Activated CD4-positive, alpha-beta T cell treated with anti-CD3 and anti-CD28 coated beads, Interleukin-2, amount 10 ng/mL, durations not matched to agents 24 days and 14 days (primary cell): ENCODE measurements at regions of chr14 and their contacts with region 1.

Region 1: GRCh38 chr14:71555654-71556559 is 376.3 kb upstream of the RGS6 start:
- DNase-seq: peak; percentile 91
- H3K4me3 Mint-ChIP-seq: peak overlapping the region; percentile 59
- H3K27ac Mint-ChIP-seq: peak overlapping the region; percentile 92
- H3K4me1 Mint-ChIP-seq: peaks cover 61% of the 10 kb centered on the region
- H3K27me3 Mint-ChIP-seq: no peaks in the 10 kb centered on the region

Region 2: GRCh38 chr14:71221119-71221518 is 334.8 kb before region 1 on chr14:
- intact Hi-C with region 1: loop called (anchors 1 kb)
- DNase-seq: no peak
- H3K4me3 Mint-ChIP-seq: no peak overlapping the region
- H3K27ac Mint-ChIP-seq: no peak overlapping the region
- H3K4me1 Mint-ChIP-seq: peaks cover 15% of the 10 kb centered on the region
- H3K27me3 Mint-ChIP-seq: no peaks in the 10 kb centered on the region

Region 3: DNA sequence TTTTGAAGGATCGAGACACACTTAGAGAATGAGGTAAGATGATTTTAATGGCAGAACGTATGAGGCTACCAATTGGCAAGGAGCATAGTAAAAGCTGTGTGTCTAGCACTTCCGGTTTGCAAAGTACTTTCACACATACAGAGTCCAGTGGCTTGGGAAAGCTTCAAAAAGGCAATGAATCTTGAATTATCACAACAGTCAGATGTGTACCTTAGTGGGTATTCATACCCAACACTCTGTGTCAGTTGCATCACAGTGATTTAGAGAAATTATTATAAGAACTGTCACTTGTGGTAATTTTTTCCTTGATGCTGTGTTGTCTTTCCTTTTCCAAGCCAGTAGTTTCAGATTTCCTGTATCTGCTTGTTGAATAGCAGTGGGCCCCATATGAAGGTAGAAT is 224.5 kb before region 1 on chr14:
- intact Hi-C with region 1: loop called (anchors 1 kb)
- DNase-seq: no peak
- H3K4me3 Mint-ChIP-seq: peak overlapping the region; percentile 23
- H3K27ac Mint-ChIP-seq: peak overlapping the region; percentile 92
- H3K4me1 Mint-ChIP-seq: peaks cover 55% of the 10 kb centered on the region
- H3K27me3 Mint-ChIP-seq: no peaks in the 10 kb centered on the region

Region 4: DNA sequence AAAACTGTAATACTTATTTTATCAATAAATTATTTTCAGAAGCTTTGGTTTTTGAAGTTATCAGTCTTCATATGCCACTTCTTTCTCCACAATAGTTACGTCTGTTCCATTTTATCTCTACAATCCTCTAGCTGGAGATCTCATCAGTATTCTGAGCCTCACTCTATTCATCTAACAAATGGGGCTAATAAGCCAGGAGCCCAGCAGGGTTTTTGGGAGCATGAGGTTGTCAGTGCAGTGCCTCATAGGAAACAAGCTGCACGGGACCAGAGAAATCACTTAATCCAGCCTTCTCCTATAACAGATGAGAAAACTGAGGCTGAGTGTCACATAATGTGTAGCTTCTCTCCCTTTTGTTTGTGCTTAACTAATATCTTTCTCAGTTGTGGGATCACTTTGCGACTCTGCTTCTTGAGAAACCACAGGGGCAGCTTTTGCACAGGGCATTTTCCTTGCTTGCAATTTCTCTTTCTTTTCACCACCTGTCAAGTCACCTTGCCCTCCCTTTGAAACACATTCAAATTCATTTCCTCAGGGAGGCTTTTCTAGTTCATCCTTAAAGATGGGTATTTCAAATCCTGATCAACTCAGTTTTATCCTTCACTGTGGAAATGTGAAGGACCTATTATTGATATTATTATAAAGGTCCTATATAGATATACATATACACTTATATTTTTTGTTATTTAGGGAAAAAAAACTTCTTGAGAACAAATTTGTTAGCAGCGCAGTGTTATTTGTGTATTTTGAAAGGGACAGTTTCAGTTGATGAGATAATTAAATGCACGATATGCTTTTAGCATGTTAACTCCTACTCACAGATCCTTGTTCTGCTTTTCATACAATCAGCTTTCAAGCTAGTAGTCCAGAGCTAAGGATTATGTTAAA is 125.3 kb before region 1 on chr14:
- intact Hi-C with region 1: no loop called
- DNase-seq: peak; percentile 48
- H3K4me3 Mint-ChIP-seq: no peak overlapping the region
- H3K27ac Mint-ChIP-seq: no peak overlapping the region
- H3K4me1 Mint-ChIP-seq: peaks cover 14% of the 10 kb centered on the region
- H3K27me3 Mint-ChIP-seq: no peaks in the 10 kb centered on the region

Region 5: DNA sequence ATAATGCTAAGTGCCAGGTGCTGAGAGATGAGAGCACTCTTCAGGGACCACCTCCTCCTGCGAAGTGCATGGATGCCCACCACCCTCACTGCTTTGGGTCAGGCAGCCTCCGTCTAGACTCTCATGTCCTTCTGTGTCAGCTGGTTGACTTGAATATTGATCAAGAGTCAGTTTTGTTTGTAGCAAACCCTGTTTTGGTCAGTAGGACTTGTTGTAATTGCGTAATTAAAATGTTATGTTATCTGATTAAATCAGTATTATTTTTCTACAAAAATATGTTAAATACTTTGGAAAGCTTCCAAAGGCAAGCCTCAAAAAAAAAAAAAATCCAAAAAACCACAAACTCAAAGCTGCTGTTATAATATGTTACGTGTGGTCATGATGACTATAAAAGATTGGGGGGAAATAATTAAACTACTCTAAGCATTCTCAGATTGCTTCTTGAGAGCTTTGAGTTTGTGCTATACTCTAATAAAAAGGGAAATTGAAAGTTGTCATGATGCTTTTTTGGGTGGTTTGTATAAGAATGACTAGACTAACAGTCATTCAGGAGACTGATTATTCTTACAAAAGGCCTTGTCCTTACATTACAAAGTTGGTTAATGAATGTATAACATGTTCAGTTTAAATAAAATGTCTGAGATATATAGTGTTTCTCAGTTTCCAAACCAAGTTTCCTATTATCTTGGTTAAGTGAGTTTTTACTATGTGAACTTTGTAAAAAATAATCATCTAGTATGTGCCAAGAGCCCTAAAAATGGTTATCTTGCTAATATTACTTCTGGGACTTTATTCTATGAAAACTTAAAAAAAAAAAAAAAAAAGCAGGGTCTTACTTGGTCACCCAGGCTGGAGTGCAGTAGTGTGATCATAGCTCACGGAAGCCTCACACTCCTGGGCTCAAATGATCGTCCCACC is 83.6 kb before region 1 on chr14:
- intact Hi-C with region 1: loop called (anchors 2 kb)
- DNase-seq: peak; percentile 41
- H3K4me3 Mint-ChIP-seq: no peak overlapping the region
- H3K27ac Mint-ChIP-seq: no peak overlapping the region
- H3K4me1 Mint-ChIP-seq: peaks cover 47% of the 10 kb centered on the region
- H3K27me3 Mint-ChIP-seq: no peaks in the 10 kb centered on the region

Region 6: GRCh38 chr14:71591929-71592328 is 36.0 kb after region 1 on chr14:
- intact Hi-C with region 1: loop called (anchors 2 kb)
- DNase-seq: peak; percentile 72
- H3K4me3 Mint-ChIP-seq: peak overlapping the region; percentile 48
- H3K27ac Mint-ChIP-seq: peak overlapping the region; percentile 58
- H3K4me1 Mint-ChIP-seq: peaks cover 51% of the 10 kb centered on the region
- H3K27me3 Mint-ChIP-seq: no peaks in the 10 kb centered on the region